Activated CD4-positive, alpha-beta T cell treated with anti-CD3 and anti-CD28 coated beads, Interleukin-2, amount 10 ng/mL, durations not matched to agents 24 days and 14 days (primary cell): ENCODE measurements at regions of chr12 and their contacts with region 1.

Region 1: GRCh38 chr12:14384783-14385638 is 19.5 kb downstream of the ATF7IP start:
- DNase-seq: peak; percentile 91
- H3K4me3 Mint-ChIP-seq: peak overlapping the region; percentile 77
- H3K27ac Mint-ChIP-seq: peak overlapping the region; percentile 84
- H3K4me1 Mint-ChIP-seq: peaks cover 44% of the 10 kb centered on the region
- H3K27me3 Mint-ChIP-seq: no peaks in the 10 kb centered on the region

Region 2: DNA sequence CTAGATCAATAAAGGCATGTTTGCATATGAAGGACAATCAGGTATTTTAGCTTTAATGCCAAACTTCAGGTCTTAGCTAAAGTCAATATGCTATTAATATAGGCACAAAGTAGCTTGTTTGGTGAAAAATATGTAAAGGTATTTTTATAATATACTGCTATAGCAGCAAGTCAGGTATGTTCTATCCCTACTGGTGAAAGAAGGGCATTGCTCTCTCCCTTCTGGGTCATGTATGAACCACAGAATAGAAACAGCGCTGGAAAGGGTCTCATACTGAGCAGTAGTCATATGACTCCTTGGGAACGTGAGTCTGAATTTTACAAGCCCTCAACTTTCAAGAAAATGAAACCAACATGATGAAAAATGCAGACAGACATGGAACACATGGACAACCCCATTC is 718.2 kb before region 1 on chr12:
- intact Hi-C with region 1: no loop called
- DNase-seq: no peak
- H3K4me3 Mint-ChIP-seq: no peak overlapping the region
- H3K27ac Mint-ChIP-seq: no peak overlapping the region
- H3K4me1 Mint-ChIP-seq: no peaks in the 10 kb centered on the region
- H3K27me3 Mint-ChIP-seq: peaks cover 2% of the 10 kb centered on the region

Region 3: DNA sequence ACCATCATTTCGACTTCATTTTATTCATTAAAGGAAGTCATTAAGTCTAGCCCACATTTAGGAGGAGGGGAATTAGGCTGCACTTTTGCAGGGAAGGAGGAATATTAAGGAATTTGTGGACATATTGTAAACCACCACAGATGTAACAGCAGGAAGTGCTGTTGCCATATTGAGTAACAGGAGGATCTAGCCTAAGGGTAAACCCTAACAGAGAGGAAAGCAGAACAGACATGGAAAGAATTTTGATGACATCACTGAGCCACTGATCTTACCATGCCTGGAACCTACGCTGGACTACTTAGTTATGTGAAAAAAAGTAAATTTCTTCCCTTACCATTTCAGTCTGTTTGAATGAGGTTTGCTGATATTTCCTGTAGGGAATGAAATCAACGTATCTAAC is 120.2 kb before region 1 on chr12:
- intact Hi-C with region 1: no loop called
- DNase-seq: no peak
- H3K4me3 Mint-ChIP-seq: no peak overlapping the region
- H3K27ac Mint-ChIP-seq: no peak overlapping the region
- H3K4me1 Mint-ChIP-seq: peaks cover 13% of the 10 kb centered on the region
- H3K27me3 Mint-ChIP-seq: no peaks in the 10 kb centered on the region

Region 4: DNA sequence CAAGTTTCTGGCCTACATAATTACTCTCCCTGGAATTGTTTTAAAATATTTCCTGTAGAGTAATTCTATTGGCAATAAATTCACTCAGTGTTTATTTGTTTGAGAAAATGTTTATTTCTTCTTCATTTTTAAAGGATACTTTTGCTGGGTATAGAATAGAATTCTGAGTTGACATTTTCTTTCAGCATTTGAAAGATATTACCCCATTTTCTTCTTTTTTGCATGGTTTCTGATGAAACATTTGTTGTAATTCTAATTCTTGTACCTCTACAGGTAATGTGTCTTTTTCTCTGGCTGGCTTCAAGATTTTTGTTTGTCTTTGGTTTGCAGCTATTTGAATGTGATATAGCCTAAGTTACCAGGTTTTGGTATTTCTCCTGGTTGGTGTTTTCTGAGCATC is 44.6 kb before region 1 on chr12:
- intact Hi-C with region 1: no loop called
- DNase-seq: no peak
- H3K4me3 Mint-ChIP-seq: no peak overlapping the region
- H3K27ac Mint-ChIP-seq: no peak overlapping the region
- H3K4me1 Mint-ChIP-seq: no peaks in the 10 kb centered on the region
- H3K27me3 Mint-ChIP-seq: no peaks in the 10 kb centered on the region

Region 5: GRCh38 chr12:14373217-14373616 is 11.8 kb before region 1 on chr12:
- intact Hi-C with region 1: loop called (anchors 1 kb)
- DNase-seq: no peak
- H3K4me3 Mint-ChIP-seq: peak overlapping the region; percentile 7
- H3K27ac Mint-ChIP-seq: peak overlapping the region; percentile 26
- H3K4me1 Mint-ChIP-seq: peaks cover 38% of the 10 kb centered on the region
- H3K27me3 Mint-ChIP-seq: no peaks in the 10 kb centered on the region

Region 6: GRCh38 chr12:14399871-14400270 is 14.9 kb after region 1 on chr12:
- intact Hi-C with region 1: loop called (anchors 2 kb)
- DNase-seq: peak; percentile 67
- H3K4me3 Mint-ChIP-seq: peak overlapping the region; percentile 82
- H3K27ac Mint-ChIP-seq: peak overlapping the region; percentile 86
- H3K4me1 Mint-ChIP-seq: peaks cover 70% of the 10 kb centered on the region
- H3K27me3 Mint-ChIP-seq: no peaks in the 10 kb centered on the region

Region 7: GRCh38 chr12:14417715-14418114 is 32.7 kb after region 1 on chr12:
- intact Hi-C with region 1: loop called (anchors 1 kb)
- DNase-seq: peak; percentile 90
- H3K4me3 Mint-ChIP-seq: peak overlapping the region; percentile 62
- H3K27ac Mint-ChIP-seq: peak overlapping the region; percentile 85
- H3K4me1 Mint-ChIP-seq: peaks cover 37% of the 10 kb centered on the region
- H3K27me3 Mint-ChIP-seq: no peaks in the 10 kb centered on the region

Region 8: DNA sequence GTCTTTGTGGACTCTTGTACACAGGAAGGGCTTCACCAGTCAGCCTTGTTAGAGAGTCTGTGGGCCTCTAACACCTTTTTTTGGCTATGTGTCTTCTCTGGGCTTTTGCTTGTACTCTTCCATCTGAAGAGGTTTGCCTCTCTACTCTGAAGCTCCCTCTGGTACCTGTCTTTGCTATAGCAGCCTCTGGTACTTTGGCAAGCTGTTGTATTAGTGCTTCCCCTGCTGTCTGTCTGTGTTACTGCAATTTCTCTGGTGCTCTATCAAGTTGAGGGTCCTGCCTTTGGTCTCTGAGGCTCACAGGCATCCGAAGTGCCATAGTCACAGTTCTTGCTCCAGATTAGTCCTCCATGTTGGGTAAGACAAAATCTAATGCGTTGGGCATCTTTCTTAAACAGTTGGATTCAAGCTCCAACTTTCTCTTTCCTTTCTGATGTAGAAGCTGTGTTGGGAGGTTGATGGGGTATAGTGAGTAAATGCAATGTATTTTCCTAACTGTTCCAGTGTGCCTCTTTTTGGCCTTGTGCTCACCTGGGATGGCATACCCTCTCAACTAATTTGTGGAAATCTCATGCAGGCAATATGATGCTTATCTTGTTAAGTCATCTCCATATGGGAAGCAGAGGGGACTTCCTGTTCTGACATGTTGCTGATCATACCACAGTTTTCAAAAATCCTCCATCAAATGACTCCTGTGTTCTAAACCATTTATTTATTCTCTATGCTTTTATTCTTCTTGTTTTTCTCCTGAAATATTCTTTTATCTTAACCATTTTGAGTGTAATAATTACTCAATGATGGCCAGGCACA is 69.3 kb after region 1 on chr12:
- intact Hi-C with region 1: loop called (anchors 5 kb)
- DNase-seq: peak; percentile 80
- H3K4me3 Mint-ChIP-seq: peak overlapping the region; percentile 39
- H3K27ac Mint-ChIP-seq: peak overlapping the region; percentile 69
- H3K4me1 Mint-ChIP-seq: peaks cover 47% of the 10 kb centered on the region
- H3K27me3 Mint-ChIP-seq: no peaks in the 10 kb centered on the region

Region 9: GRCh38 chr12:14803011-14803829 is 418.2 kb after region 1 on chr12 and contains the starts of genes C12orf60 and WBP11:
- intact Hi-C with region 1: no loop called
- DNase-seq: peak; percentile 96
- H3K4me3 Mint-ChIP-seq: no peak within 1 kb of the TSS
- H3K27ac Mint-ChIP-seq: no peak within 1 kb of the TSS
- H3K4me1 Mint-ChIP-seq: peaks cover 22% of the 10 kb centered on the region
- H3K27me3 Mint-ChIP-seq: no peaks in the 10 kb centered on the region
- total RNA-seq, gene C12orf60: 2.2 and 3.0 TPM in 2 replicates
- total RNA-seq, gene WBP11: 136 and 138 TPM in 2 replicates